ENCODE measurements at regions of chr3 and their contacts with region 1.

Region 1: DNA sequence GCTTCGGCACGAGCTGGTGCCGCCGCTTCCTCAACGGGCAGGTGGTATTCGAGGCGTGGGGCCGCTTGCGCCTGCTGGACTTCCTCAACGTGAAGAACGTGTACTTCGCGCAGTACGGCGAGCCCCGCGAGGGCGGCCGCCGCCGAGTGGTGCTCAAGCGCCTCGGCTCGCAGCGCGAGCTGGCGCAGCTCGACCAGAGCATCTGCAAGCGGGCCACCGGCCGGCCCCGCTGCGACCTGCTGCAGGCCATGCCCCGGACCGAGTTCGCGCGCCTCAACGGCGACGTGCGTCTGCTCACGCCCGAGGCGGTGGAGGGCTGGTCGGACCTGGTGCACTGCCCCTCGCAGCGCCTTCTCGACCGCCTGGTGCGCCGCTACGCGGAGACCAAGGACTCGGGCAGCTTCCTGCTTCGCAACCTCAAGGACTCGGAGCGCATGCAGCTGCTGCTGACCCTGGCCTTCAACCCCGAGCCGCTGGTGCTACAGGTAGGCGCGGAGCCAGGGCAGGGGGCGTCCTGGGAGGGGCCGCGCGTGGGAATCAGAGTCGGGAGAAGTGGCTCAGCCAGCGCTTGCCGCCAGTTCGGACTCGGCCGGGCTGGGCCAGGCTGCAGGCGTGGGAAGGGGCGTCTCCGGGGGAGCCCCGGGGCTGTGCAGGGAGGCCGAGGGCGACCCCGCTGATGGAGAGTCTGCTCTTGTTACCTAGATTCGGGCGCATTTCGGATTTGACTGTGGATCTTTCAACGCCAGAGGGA is 1.1 kb downstream of the DIPK2A start:
- DNase-seq: peak in 8 of 9 donors; percentile 29 to 78 (median 61)
- ATAC-seq: peak; percentile 14
- H3K4me3 ChIP-seq: peak overlapping the region; percentile 61
- H3K4me3 Mint-ChIP-seq: peak overlapping the region; percentile 91 to 100 (median 97)
- H3K27ac ChIP-seq: peak overlapping the region; percentile 84
- H3K27ac Mint-ChIP-seq: peak overlapping the region; percentile 87 to 99 (median 97)
- H3K4me1 ChIP-seq: peaks cover 10 to 14% of the 10 kb centered on the region in 2 donors
- H3K4me1 Mint-ChIP-seq: peaks cover 25 to 46% (median 33%) of the 10 kb centered on the region in 7 donors
- H3K27me3 ChIP-seq: no peaks in the 10 kb centered on the region
- H3K27me3 Mint-ChIP-seq: peaks cover 0 to 22% (median 0%) of the 10 kb centered on the region in 5 donors

Region 2: DNA sequence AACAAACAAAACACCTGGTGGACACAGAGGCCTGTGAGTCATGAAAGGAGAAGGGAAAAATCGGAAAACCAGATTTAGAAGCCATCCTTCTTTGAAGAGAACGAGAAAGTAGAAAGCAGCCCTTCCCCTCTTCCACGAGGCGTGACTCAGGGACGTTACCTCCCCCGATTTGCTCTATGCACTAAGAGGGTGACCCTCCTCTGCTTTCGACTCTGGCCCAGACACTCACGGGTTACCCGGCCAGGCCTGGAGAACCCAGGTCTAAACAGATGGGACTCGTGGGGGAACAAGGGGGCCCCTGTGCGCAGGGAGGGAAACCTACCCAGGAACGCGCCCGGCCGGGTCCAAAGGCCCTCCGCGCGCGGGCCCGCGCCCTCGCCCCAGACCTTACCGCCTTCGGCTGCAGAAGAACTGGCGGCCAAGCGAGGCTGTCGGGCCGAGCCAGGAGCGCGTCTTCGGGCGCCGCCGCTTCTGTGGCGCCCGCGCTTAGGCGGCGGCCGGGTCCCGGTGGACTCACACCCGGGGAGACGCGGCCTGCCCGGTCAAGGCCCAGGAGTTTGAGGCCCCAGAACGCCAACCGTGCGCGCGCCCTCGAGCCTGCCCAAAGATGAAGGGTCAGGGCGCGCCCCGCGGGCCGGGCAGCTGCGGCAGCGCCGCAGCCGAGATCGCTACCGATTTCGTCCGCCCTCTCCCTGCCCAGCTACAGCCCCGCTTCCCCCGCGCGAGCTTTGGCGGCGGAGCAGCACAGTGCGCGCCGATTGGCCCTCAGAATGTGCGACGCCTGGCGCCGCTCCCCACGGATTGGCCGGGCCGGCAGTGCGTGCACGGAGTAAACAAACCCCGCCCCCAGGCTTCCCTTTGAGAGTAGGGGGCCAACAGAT is 1823.6 kb before region 1 on chr3 and contains the start of gene TFDP2:
- CTCF ChIA-PET with region 1: no interaction called
- POLR2A ChIA-PET with region 1: no interaction called
- intact Hi-C with region 1: loop called (anchors 1 to 5 kb)
- DNase-seq: peak; percentile 77 to 88 (median 86)
- ATAC-seq: peak; percentile 99
- H3K4me3 ChIP-seq: peak within 1 kb of the TSS; percentile 81
- H3K4me3 Mint-ChIP-seq: peak within 1 kb of the TSS; percentile 85 to 96 (median 92)
- H3K27ac ChIP-seq: peak within 1 kb of the TSS; percentile 78
- H3K27ac Mint-ChIP-seq: peak within 1 kb of the TSS; percentile 57 to 95 (median 87)
- H3K4me1 ChIP-seq: peaks cover 0 to 13% of the 10 kb centered on the region in 2 donors
- H3K4me1 Mint-ChIP-seq: peaks cover 24 to 41% (median 32%) of the 10 kb centered on the region in 7 donors
- H3K27me3 ChIP-seq: no peaks in the 10 kb centered on the region
- H3K27me3 Mint-ChIP-seq: peaks cover 0 to 16% (median 0%) of the 10 kb centered on the region in 5 donors
- total RNA-seq, gene TFDP2: 23.7 to 44.7 (median 41.0) TPM

Region 3: GRCh38 chr3:142595951-142596725 is 1376.5 kb before region 1 on chr3 and contains the start of gene PLS1:
- CTCF ChIA-PET with region 1: no interaction called
- POLR2A ChIA-PET with region 1: no interaction called
- intact Hi-C with region 1: loop called in 1 of 2 experiments (anchors 5 kb)
- DNase-seq: peak; percentile 74 to 97 (median 85)
- ATAC-seq: peak; percentile 91
- H3K4me3 ChIP-seq: peak within 1 kb of the TSS; percentile 82
- H3K4me3 Mint-ChIP-seq: peak within 1 kb of the TSS; percentile 96 to 100 (median 98)
- H3K27ac ChIP-seq: peak within 1 kb of the TSS; percentile 67
- H3K27ac Mint-ChIP-seq: peak within 1 kb of the TSS; percentile 83 to 95 (median 91)
- H3K4me1 ChIP-seq: peaks cover 0 to 3% of the 10 kb centered on the region in 2 donors
- H3K4me1 Mint-ChIP-seq: peaks cover 0 to 32% (median 20%) of the 10 kb centered on the region in 7 donors
- H3K27me3 ChIP-seq: no peaks in the 10 kb centered on the region
- H3K27me3 Mint-ChIP-seq: peaks cover 0 to 11% (median 0%) of the 10 kb centered on the region in 5 donors
- total RNA-seq, gene PLS1: 1.6 to 2.8 (median 2.0) TPM

Region 4: GRCh38 chr3:143171141-143171970 is 801.3 kb before region 1 on chr3:
- CTCF ChIA-PET with region 1: no interaction called
- POLR2A ChIA-PET with region 1: interaction called, 9 read pairs
- intact Hi-C with region 1: loop called in 1 of 2 experiments (anchors 5 kb)
- DNase-seq: peak in 6 of 9 donors; percentile 27 to 61 (median 55)
- ATAC-seq: peak; percentile 78
- H3K4me3 ChIP-seq: peak overlapping the region; percentile 24
- H3K4me3 Mint-ChIP-seq: peak overlapping the region; percentile 39 to 86 (median 82)
- H3K27ac ChIP-seq: peak overlapping the region; percentile 61
- H3K27ac Mint-ChIP-seq: peak overlapping the region; percentile 87 to 96 (median 92)
- H3K4me1 ChIP-seq: peaks cover 17 to 59% of the 10 kb centered on the region in 2 donors
- H3K4me1 Mint-ChIP-seq: peaks cover 58 to 91% (median 82%) of the 10 kb centered on the region in 7 donors
- H3K27me3 ChIP-seq: no peaks in the 10 kb centered on the region
- H3K27me3 Mint-ChIP-seq: no peaks in the 10 kb centered on the region

Region 5: GRCh38 chr3:143775459-143775858 is 197.2 kb before region 1 on chr3:
- CTCF ChIA-PET with region 1: interaction called, 4 read pairs
- POLR2A ChIA-PET with region 1: interaction called, 3 read pairs
- intact Hi-C with region 1: loop called (anchors 1 kb)
- DNase-seq: peak in 6 of 9 donors; percentile 23 to 58 (median 46)
- ATAC-seq: peak; percentile 86
- H3K4me3 ChIP-seq: no peak overlapping the region
- H3K4me3 Mint-ChIP-seq: peak overlapping the region in 1 of 10 donors; percentile 38
- H3K27ac ChIP-seq: no peak overlapping the region
- H3K27ac Mint-ChIP-seq: no peak overlapping the region
- H3K4me1 ChIP-seq: no peaks in the 10 kb centered on the region
- H3K4me1 Mint-ChIP-seq: peaks cover 0 to 6% (median 3%) of the 10 kb centered on the region in 7 donors
- H3K27me3 ChIP-seq: no peaks in the 10 kb centered on the region
- H3K27me3 Mint-ChIP-seq: no peaks in the 10 kb centered on the region

Region 6: DNA sequence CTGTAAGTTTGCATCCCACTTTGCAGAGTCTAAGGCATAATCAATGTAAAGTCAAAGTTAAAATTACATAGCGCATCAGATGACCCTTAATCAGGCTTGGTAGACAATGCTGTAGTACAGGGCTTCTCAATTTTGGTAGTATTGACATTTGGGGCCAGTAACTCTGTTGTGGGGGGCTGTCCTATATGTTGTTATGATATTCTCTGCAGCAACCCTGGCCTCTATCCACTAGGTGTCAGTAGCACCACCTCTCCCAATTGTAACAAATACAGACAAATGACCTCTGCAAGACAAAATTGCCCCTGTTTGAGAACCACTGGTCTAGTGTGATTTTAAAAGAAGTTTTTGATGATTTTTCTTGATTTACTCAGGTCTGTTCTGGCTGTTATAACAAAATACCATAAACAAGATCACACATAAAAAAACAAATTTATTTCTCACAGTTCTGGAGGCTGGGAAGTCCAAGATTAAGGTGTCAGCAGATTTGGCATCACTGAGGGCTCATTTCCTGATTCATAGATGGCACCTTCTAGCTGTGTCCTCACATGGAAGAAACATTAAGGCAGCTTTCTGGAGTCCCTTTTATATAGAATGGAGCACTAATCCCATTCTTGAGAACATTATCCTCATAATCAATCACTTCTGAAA is 86.8 kb before region 1 on chr3:
- CTCF ChIA-PET with region 1: no interaction called
- POLR2A ChIA-PET with region 1: interaction called, 4 read pairs
- intact Hi-C with region 1: loop called in 1 of 2 experiments (anchors 5 kb)
- DNase-seq: peak in 5 of 9 donors; percentile 12 to 30 (median 29)
- ATAC-seq: peak; percentile 85
- H3K4me3 ChIP-seq: no peak overlapping the region
- H3K4me3 Mint-ChIP-seq: no peak overlapping the region
- H3K27ac ChIP-seq: no peak overlapping the region
- H3K27ac Mint-ChIP-seq: no peak overlapping the region
- H3K4me1 ChIP-seq: no peaks in the 10 kb centered on the region
- H3K4me1 Mint-ChIP-seq: no peaks in the 10 kb centered on the region
- H3K27me3 ChIP-seq: no peaks in the 10 kb centered on the region
- H3K27me3 Mint-ChIP-seq: peaks cover 0 to 20% (median 0%) of the 10 kb centered on the region in 5 donors

Region 7: GRCh38 chr3:144652573-144652972 is 679.9 kb after region 1 on chr3:
- CTCF ChIA-PET with region 1: no interaction called
- POLR2A ChIA-PET with region 1: no interaction called
- intact Hi-C with region 1: no loop called
- DNase-seq: no peak
- ATAC-seq: no peak
- H3K4me3 ChIP-seq: no peak overlapping the region
- H3K4me3 Mint-ChIP-seq: no peak overlapping the region
- H3K27ac ChIP-seq: no peak overlapping the region
- H3K27ac Mint-ChIP-seq: no peak overlapping the region
- H3K4me1 ChIP-seq: no peaks in the 10 kb centered on the region
- H3K4me1 Mint-ChIP-seq: no peaks in the 10 kb centered on the region
- H3K27me3 ChIP-seq: no peaks in the 10 kb centered on the region
- H3K27me3 Mint-ChIP-seq: no peaks in the 10 kb centered on the region